ENCODE measurements at regions of chr1 and their contacts with region 1.

Region 1: DNA sequence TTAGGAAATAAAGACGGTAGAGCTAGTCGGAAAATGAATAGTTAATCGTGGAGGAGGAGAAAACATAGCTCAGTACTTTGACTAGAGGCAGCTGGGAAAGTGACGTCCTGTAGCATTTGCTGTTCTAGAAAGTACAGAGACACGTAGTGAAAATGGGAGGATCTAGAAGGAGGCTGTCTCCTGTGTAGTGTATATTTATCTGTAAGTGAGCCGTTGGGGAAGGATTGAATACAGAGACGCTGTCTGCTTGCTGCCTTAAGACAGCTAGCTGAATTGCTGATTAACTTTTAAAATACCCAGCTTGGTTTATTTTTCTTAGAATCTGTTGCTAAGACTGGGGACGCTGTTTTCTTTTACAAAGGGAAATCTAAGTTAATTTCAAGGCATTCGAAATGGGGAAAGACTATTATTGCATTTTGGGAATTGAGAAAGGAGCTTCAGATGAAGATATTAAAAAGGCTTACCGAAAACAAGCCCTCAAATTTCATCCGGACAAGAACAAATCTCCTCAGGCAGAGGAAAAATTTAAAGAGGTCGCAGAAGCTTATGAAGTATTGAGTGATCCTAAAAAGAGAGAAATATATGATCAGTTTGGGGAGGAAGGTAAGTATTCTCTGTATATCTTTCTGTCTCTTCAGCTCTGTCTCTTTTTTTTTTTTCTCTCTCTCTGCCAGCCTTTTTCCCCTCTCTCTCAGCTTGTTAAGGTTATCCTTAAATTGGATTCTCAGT is at the start of gene DNAJB4:
- DNase-seq: peak; percentile 95
- ATAC-seq: peak; percentile 99
- H3K4me3 ChIP-seq: peak within 1 kb of the TSS; percentile 60 to 71 (median 62); a peak in 5 of 6 replicates
- H3K27ac ChIP-seq: peak within 1 kb of the TSS; percentile 97
- H3K4me1 ChIP-seq: peaks cover 60% of the 10 kb centered on the region
- H3K27me3 ChIP-seq: no peaks in the 10 kb centered on the region
- CTCF ChIP-seq: no peak
- EP300 ChIP-seq: peak in 1 of 2 experiments; percentile 29; a peak in 1 of 4 replicates
- POLR2A ChIP-seq: peak in 1 of 2 experiments; percentile 63; a peak in 2 of 4 replicates
- RAD21 ChIP-seq: no peak
- total RNA-seq, gene DNAJB4: 18.6 and 25.7 TPM in 2 replicates

Region 2: DNA sequence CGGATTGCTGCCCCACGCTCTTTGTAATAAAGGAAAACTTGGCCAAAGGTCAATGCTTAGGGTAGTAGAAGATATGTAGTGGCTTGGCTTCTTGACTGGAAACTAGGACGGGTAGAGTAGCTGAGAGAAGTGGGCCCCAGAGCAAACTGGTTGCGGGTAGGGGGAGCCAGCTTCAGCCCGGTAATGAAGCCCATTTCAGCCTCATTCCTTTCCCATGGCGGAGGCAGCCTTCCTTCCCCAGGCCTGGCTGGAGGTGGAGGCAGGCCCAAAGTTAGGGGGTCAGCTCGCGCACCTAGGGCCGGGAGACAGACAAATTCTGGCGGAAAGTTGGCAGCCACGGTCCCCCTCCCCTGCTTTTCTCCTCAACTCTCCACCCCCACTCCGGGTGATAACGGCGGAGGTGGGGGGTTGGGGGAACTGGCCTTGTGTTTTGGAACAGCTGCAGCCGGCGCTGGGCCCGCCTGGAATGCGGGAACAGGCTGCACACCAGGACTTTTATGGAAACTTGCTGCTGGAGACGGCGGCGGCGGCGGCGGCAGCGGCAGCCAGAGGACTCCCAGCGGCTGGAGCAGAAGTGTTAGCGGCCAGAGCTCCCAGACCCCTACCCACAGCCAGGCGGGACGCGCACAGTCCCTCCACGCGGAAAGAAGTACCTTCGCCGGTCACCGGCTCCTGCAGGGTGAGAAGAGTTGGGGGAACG is 116.7 kb before region 1 on chr1 and contains the start of gene NEXN:
- CTCF ChIA-PET with region 1: no interaction called
- POLR2A ChIA-PET with region 1: interaction called, 10 read pairs
- in situ Hi-C with region 1: no loop called
- intact Hi-C with region 1: no loop called
- DNase-seq: peak; percentile 44
- ATAC-seq: peak; percentile 89
- H3K4me3 ChIP-seq: peak within 1 kb of the TSS; percentile 71 to 96 (median 85)
- H3K27ac ChIP-seq: peak within 1 kb of the TSS; percentile 51
- H3K4me1 ChIP-seq: peaks cover 13% of the 10 kb centered on the region
- H3K27me3 ChIP-seq: no peaks in the 10 kb centered on the region; a peak in 1 of 5 replicates
- CTCF ChIP-seq: peak; percentile 47
- EP300 ChIP-seq: no peak
- POLR2A ChIP-seq: peak in 1 of 2 experiments; percentile 38; a peak in 1 of 4 replicates
- RAD21 ChIP-seq: no peak
- total RNA-seq, gene NEXN: 0.97 and 1.1 TPM in 2 replicates

Region 3: DNA sequence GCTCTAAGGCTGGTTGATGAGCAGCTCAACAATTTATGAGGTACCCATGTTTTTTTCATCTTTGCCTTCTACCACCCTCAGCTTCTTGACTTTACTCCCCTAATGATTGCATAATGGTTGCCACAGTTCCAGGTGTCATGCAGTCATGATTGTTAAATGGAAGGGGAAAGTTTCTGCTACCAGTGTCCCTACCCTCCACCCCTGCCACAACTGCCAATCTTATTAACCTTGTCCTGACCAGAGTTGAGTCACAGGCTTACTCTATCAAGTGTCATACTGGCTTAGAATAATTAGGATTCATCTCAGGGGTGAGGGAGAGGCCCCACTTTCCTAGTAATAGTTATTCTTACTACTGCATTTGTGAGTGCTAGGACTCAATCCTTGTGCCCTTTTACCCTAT is 18.1 kb before region 1 on chr1:
- CTCF ChIA-PET with region 1: no interaction called
- POLR2A ChIA-PET with region 1: interaction called, 161 read pairs
- in situ Hi-C with region 1: no loop called
- intact Hi-C with region 1: loop called (anchors 2 kb)
- DNase-seq: no peak
- ATAC-seq: no peak
- H3K4me3 ChIP-seq: no peak overlapping the region
- H3K27ac ChIP-seq: no peak overlapping the region
- H3K4me1 ChIP-seq: peaks cover 61% of the 10 kb centered on the region
- H3K27me3 ChIP-seq: no peaks in the 10 kb centered on the region
- CTCF ChIP-seq: no peak
- EP300 ChIP-seq: no peak
- POLR2A ChIP-seq: no peak
- RAD21 ChIP-seq: no peak

Region 4: GRCh38 chr1:78045926-78046778 is 41.3 kb after region 1 on chr1 and contains the start of gene GIPC2:
- CTCF ChIA-PET with region 1: no interaction called
- POLR2A ChIA-PET with region 1: interaction called, 56 read pairs
- in situ Hi-C with region 1: no loop called
- intact Hi-C with region 1: loop called (anchors 2 kb)
- DNase-seq: peak; percentile 31
- ATAC-seq: peak; percentile 86
- H3K4me3 ChIP-seq: peak within 1 kb of the TSS; percentile 79 to 96 (median 90)
- H3K27ac ChIP-seq: peak within 1 kb of the TSS; percentile 86
- H3K4me1 ChIP-seq: peaks cover 53% of the 10 kb centered on the region
- H3K27me3 ChIP-seq: no peaks in the 10 kb centered on the region; a peak in 1 of 5 replicates
- CTCF ChIP-seq: no peak; the same call in 1 of the 2 replicates
- EP300 ChIP-seq: peak in 1 of 2 experiments; percentile 28; a peak in 2 of 4 replicates
- POLR2A ChIP-seq: peak; percentile 65 to 78
- RAD21 ChIP-seq: no peak; the same call in 1 of the 2 replicates
- total RNA-seq, gene GIPC2: 21.6 and 39.7 TPM in 2 replicates

Region 5: GRCh38 chr1:78095593-78095992 is 90.7 kb after region 1 on chr1:
- CTCF ChIA-PET with region 1: no interaction called
- POLR2A ChIA-PET with region 1: no interaction called
- in situ Hi-C with region 1: no loop called
- intact Hi-C with region 1: no loop called
- DNase-seq: no peak
- ATAC-seq: no peak
- H3K4me3 ChIP-seq: no peak overlapping the region
- H3K27ac ChIP-seq: no peak overlapping the region
- H3K4me1 ChIP-seq: no peaks in the 10 kb centered on the region
- H3K27me3 ChIP-seq: no peaks in the 10 kb centered on the region
- CTCF ChIP-seq: no peak
- EP300 ChIP-seq: no peak
- POLR2A ChIP-seq: no peak
- RAD21 ChIP-seq: no peak